ENCODE measurements at regions of chr1 and their contacts with region 1.

Region 1: GRCh38 chr1:40078512-40079333 is 18.3 kb downstream of the PPT1 start:
- DNase-seq: peak; percentile 69 to 81 (median 72)
- ATAC-seq: peak; percentile 91
- H3K4me3 ChIP-seq: no peak overlapping the region
- H3K27ac ChIP-seq: no peak overlapping the region
- H3K4me1 ChIP-seq: peaks cover 0 to 13% of the 10 kb centered on the region in 2 experiments; a peak in 3 of 5 replicates
- H3K27me3 ChIP-seq: no peaks in the 10 kb centered on the region
- CTCF ChIP-seq: peak; percentile 80 to 82 (median 80)
- EP300 ChIP-seq: no peak
- POLR2A ChIP-seq: no peak
- RAD21 ChIP-seq: peak; percentile 56 to 66

Region 2: DNA sequence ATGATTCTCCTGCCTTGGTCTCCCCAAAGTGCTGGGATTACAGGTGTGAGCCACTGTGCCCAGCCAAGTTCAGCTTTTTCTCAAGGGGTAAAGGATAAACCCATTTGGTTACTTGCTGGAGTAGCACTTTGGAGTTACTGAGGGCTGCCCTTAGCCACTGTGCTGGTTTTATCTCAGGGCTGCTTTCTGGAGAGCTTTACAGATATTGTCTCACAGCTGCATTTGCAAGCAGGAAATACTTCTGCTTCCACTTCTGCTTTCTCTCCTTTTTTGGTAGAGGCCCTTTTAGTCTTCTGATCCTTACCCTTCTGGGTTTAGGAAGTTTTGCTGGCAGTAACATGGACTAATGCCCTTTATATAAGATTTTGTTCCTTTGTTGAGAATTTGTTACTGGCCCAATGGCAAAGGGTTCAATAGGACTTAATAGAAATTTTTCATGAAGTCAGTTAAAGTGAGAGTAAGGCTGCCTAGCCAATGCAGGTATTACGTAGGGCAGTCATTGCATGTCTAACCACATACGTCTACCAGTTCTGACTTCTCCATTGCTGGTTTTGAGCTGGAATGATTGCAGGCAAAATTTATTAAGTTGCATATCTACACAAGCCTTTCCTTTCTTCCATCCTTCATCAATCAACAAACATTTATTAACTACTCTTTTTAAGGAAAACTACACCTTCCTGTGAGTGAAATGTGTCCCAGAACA is 13.8 kb before region 1 on chr1:
- CTCF ChIA-PET with region 1: no interaction called
- POLR2A ChIA-PET with region 1: interaction called, 64 read pairs
- in situ Hi-C with region 1: no loop called
- intact Hi-C with region 1: no loop called
- DNase-seq: no peak
- ATAC-seq: 0 out of 3 replicates have a peak, but pooled peaks have one; percentile 23
- H3K4me3 ChIP-seq: no peak overlapping the region
- H3K27ac ChIP-seq: no peak overlapping the region; the same call in 2 of the 3 replicates
- H3K4me1 ChIP-seq: peaks cover 0 to 17% of the 10 kb centered on the region in 2 experiments; a peak in 3 of 5 replicates
- H3K27me3 ChIP-seq: no peaks in the 10 kb centered on the region
- CTCF ChIP-seq: no peak
- EP300 ChIP-seq: no peak
- POLR2A ChIP-seq: no peak
- RAD21 ChIP-seq: peak in 1 of 2 experiments; percentile 29; a peak in 2 of 4 replicates

Region 3: DNA sequence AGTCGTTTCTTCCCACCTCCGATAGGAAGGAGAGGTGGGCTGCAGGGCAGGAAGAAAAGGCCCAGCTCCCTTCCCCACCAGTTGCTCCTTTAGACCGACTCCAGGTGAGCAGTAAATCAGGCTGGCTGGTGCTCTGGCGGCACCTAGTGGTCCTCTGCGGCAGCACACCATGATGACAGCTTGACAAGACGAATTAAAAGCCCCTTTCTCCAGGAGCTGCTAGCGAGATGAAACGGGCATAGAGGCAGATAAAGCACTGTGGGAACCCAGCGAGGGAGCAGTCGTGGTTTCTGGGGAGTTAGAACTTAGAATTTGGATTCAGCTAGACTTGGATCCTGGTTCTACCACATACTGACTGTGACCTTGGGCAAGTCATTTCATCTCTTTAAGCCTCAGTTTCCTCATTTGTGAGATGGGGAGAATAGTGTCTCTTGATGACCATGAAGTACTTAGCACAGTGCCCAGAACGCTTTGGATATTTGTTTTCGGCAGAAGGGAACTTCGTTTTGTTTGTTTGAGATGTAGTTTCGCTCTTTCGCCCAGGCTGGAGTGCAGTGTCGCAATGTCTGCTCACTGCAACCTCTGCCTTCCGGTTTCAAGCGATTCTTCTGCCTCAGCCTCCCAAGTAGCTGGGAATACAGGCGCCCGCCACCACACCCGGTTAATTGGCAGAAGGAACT is 260.2 kb after region 1 on chr1:
- CTCF ChIA-PET with region 1: interaction called, 6 read pairs
- POLR2A ChIA-PET with region 1: interaction called, 6 read pairs
- in situ Hi-C with region 1: no loop called
- intact Hi-C with region 1: loop called (anchors 2 kb)
- DNase-seq: peak; percentile 82 to 93 (median 84)
- ATAC-seq: peak; percentile 90
- H3K4me3 ChIP-seq: no peak overlapping the region
- H3K27ac ChIP-seq: no peak overlapping the region
- H3K4me1 ChIP-seq: peaks cover 15 to 21% of the 10 kb centered on the region in 2 experiments; a peak in 4 of 5 replicates
- H3K27me3 ChIP-seq: no peaks in the 10 kb centered on the region
- CTCF ChIP-seq: peak; percentile 96 to 100 (median 98)
- EP300 ChIP-seq: no peak
- POLR2A ChIP-seq: no peak
- RAD21 ChIP-seq: peak; percentile 93 to 97

Measured in K562 (cell line).